ENCODE measurements at regions of chr10 and their contacts with region 1.

Region 1: GRCh38 chr10:98815039-98815885 is 368.5 kb upstream of the HPS1 start:
- DNase-seq: no peak
- H3K4me3 ChIP-seq: no peak overlapping the region
- H3K27ac ChIP-seq: no peak overlapping the region
- H3K4me1 ChIP-seq: no peaks in the 10 kb centered on the region
- H3K27me3 ChIP-seq: no peaks in the 10 kb centered on the region
- CTCF ChIP-seq: no peak
- POLR2A ChIP-seq: no peak

Region 2: GRCh38 chr10:97089209-97089870 is 1725.9 kb before region 1 on chr10:
- intact Hi-C with region 1: no loop called
- DNase-seq: no peak
- H3K4me3 ChIP-seq: no peak overlapping the region
- H3K27ac ChIP-seq: no peak overlapping the region
- H3K4me1 ChIP-seq: no peaks in the 10 kb centered on the region
- H3K27me3 ChIP-seq: peaks cover 0 to 8% of the 10 kb centered on the region in 2 donors
- CTCF ChIP-seq: no peak
- POLR2A ChIP-seq: no peak

Region 3: GRCh38 chr10:97939446-97939990 is 875.7 kb before region 1 on chr10:
- intact Hi-C with region 1: loop called (anchors 10 kb)
- DNase-seq: no peak
- H3K4me3 ChIP-seq: no peak overlapping the region
- H3K27ac ChIP-seq: no peak overlapping the region
- H3K4me1 ChIP-seq: no peaks in the 10 kb centered on the region
- H3K27me3 ChIP-seq: no peaks in the 10 kb centered on the region
- CTCF ChIP-seq: no peak
- POLR2A ChIP-seq: no peak

Region 4: DNA sequence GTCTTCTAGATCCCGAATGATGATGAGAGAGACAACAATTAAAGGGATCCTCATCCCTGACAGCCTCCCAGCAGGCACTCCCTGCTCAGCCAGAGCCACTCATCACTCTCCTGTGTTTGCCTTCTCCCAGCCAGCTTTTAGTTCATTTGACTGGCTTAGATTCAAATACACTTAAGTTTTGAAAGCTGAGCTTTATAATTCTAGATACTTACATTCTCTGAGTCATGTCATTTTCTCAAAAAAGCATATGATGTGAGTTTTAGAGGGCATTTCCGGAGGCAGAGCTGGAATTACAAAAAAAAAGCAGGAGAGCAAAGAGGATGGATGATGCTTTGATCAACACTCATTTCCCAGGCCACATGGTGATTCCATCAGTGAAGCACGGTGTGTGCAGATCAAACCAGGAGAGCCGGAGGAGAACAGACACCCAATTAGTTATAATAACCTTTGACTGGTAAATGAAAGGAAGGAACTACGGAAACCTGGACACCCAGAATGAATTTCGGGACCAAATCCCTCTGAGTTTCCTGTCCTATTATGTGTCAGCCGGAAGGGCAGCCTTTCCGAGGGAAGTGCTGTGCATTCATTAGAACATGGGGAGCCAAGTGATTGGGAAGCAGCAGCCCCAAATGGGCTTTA is 287.0 kb before region 1 on chr10:
- intact Hi-C with region 1: no loop called
- DNase-seq: no peak
- H3K4me3 ChIP-seq: peak overlapping the region in 1 of 3 donors; percentile 15
- H3K27ac ChIP-seq: peak overlapping the region; percentile 1 to 61
- H3K4me1 ChIP-seq: no peaks in the 10 kb centered on the region
- H3K27me3 ChIP-seq: no peaks in the 10 kb centered on the region
- CTCF ChIP-seq: no peak
- POLR2A ChIP-seq: no peak

Region 5: GRCh38 chr10:98684019-98684899 is 131.0 kb before region 1 on chr10:
- intact Hi-C with region 1: no loop called
- DNase-seq: no peak
- H3K4me3 ChIP-seq: no peak overlapping the region
- H3K27ac ChIP-seq: no peak overlapping the region
- H3K4me1 ChIP-seq: no peaks in the 10 kb centered on the region
- H3K27me3 ChIP-seq: no peaks in the 10 kb centered on the region
- CTCF ChIP-seq: no peak
- POLR2A ChIP-seq: no peak

Region 6: GRCh38 chr10:98778277-98778759 is 36.9 kb before region 1 on chr10:
- intact Hi-C with region 1: no loop called
- DNase-seq: no peak
- H3K4me3 ChIP-seq: no peak overlapping the region
- H3K27ac ChIP-seq: no peak overlapping the region
- H3K4me1 ChIP-seq: no peaks in the 10 kb centered on the region
- H3K27me3 ChIP-seq: no peaks in the 10 kb centered on the region
- CTCF ChIP-seq: no peak
- POLR2A ChIP-seq: no peak